ENCODE measurements at regions of chr10 and their contacts with region 1.

Region 1: GRCh38 chr10:125982260-125982948 is 86.0 kb downstream of the FANK1 start:
- DNase-seq: peak in 6 of 7 donors; percentile 37 to 81 (median 58)
- H3K4me3 ChIP-seq: no peak overlapping the region
- H3K27ac ChIP-seq: no peak overlapping the region
- H3K4me1 ChIP-seq: no peaks in the 10 kb centered on the region
- H3K27me3 ChIP-seq: no peaks in the 10 kb centered on the region
- CTCF ChIP-seq: peak; percentile 53 to 88 (median 77)
- POLR2A ChIP-seq: no peak

Region 2: DNA sequence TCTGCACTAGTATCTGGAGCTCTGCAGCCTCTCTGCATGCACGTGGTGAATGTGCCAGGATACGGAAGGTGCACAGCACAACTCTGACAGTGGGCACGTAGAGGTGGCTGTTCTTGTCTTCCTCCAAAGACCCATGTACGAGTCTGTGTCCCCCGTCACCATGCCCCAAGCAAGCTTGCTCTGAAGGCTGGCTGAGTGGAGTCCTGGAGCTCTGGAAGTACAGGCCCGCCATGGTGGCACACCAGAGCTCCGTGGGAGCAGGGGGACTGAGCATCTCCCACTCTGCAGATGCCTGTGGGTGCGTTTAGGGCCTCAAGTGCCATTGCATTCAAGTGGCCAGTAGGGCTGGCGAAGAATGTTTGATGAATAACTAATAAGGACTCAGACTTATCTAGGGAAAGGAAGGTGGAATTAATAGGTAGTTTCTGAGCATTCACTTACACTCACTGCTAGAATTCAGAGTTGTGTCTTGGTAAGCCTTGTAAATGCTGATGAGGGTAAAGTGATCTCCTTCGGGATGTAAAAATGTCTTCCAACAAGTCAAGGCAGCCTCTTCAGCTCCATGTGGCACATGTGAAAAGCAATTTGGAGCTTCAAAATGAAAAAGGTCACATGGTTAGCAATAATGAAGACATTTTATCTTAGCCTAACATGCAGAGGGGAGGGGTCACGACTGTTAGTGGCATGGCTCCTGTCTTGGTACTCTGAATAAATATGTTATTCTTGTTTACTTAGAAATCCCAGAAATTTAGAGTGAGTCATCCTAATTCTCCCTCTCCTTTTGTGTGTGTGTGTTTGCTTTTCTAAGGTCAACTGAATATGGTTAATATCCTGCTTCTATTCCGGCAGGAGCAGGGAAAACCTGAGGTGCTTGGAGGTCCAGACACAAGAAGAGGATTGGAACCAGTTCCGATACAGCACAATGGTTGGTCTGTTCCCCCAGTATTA is 141.7 kb before region 1 on chr10:
- intact Hi-C with region 1: no loop called
- DNase-seq: no peak
- H3K4me3 ChIP-seq: no peak overlapping the region
- H3K27ac ChIP-seq: no peak overlapping the region
- H3K4me1 ChIP-seq: peaks cover 7 to 14% of the 10 kb centered on the region in 2 donors
- H3K27me3 ChIP-seq: no peaks in the 10 kb centered on the region
- CTCF ChIP-seq: no peak
- POLR2A ChIP-seq: no peak

Region 3: GRCh38 chr10:126302826-126303665 is 320.6 kb after region 1 on chr10:
- intact Hi-C with region 1: loop called in 1 of 2 experiments (anchors 5 kb)
- DNase-seq: peak in 1 of 7 donors; percentile 5
- H3K4me3 ChIP-seq: no peak overlapping the region
- H3K27ac ChIP-seq: no peak overlapping the region
- H3K4me1 ChIP-seq: no peaks in the 10 kb centered on the region
- H3K27me3 ChIP-seq: no peaks in the 10 kb centered on the region
- CTCF ChIP-seq: peak in 5 of 6 experiments; percentile 14 to 53 (median 41)
- POLR2A ChIP-seq: no peak

Region 4: DNA sequence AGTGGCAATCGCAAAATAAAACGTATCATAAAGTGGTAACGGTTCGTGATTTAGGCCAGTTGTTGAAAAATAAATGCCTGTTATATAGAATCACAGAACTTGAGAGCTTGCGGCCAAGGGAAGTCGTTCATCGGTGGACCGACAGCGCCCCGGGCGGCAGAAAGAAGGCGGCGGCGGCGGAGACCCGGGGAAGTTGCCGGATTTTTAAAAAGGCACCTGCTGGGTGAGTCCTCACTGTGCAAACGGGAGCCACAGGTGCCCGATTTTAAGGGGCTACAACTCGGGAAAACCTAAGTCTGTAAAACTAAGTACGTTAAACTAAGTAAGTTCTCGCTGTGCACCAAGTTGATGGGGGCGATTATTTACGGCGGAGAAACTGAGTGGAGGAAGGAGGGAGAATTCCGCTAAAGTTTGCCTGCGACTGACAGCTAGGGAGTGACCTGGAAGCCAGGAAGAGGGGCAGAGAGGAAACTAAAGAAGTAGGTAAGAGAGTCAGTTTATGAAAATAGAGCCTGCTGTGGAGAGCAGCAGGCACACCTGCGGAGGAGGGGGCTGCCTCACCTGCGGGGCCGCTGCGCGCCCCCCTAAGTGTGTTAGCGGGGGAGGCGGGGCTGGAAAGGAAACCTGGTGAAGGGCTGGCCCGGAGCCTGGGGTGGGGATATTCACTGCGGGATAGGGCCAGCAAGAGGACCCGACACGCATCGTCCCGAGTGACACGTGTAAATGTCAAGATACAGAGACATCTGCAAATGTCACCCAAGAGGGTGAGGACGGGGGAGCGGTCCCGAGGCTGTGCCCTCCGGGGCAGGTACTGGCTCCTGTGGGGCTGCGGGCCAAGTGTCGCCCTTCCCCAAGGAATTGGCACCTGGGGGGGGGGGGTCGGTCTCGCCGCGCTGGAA is 404.9 kb after region 1 on chr10:
- intact Hi-C with region 1: loop called in 1 of 2 experiments (anchors 5 kb)
- DNase-seq: peak; percentile 28 to 79 (median 63)
- H3K4me3 ChIP-seq: peak overlapping the region in 2 of 4 donors; percentile 14 to 53
- H3K27ac ChIP-seq: no peak overlapping the region
- H3K4me1 ChIP-seq: peaks cover 10 to 12% of the 10 kb centered on the region in 2 donors
- H3K27me3 ChIP-seq: peaks cover 10% of the 10 kb centered on the region
- CTCF ChIP-seq: peak; percentile 58 to 75 (median 70)
- POLR2A ChIP-seq: no peak

Region 5: DNA sequence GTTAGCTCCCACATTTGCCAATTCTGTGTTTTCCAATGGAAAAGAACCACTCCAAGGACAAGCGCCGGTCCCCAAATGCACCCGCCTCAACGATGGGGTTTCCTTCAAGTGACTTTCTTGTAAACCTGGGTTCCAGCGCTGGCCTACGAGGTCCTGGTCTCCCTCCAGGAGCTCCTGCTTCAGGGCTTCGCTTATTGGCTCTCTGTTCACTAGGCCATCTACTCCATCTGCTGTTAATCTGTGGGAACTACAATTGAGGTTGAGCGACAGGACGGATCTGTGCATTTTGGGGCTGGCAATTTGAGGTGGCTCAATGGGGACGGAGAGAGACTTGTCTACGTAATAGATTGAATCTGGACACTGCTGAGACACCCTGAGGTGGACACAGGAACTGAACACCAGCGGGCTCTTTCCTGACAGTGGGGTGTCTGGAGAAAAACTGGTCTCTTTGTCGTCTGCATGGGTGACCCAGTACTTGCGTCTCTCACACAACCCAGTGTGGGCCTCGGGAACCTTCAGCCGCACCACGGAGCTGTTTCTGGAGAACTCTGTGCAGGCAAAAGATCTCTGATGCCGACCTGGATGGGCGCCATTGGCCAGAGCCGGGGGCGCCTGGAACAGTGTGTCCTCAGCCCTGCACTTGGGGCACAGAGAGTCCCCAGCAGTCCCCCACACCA is 521.8 kb after region 1 on chr10:
- intact Hi-C with region 1: loop called (anchors 1 to 5 kb)
- DNase-seq: peak; percentile 31 to 72 (median 46)
- H3K4me3 ChIP-seq: no peak overlapping the region
- H3K27ac ChIP-seq: no peak overlapping the region
- H3K4me1 ChIP-seq: no peaks in the 10 kb centered on the region
- H3K27me3 ChIP-seq: peaks cover 3% of the 10 kb centered on the region
- CTCF ChIP-seq: peak; percentile 50 to 86 (median 72)
- POLR2A ChIP-seq: no peak